Activated CD8-positive, alpha-beta T cell treated with anti-CD3 and anti-CD28 coated beads, Interleukin-2, amount 10 ng/mL, durations not matched to agents 7 days and 5 days (primary cell): ENCODE measurements at regions of chr17 and their contacts with region 1.

Region 1: DNA sequence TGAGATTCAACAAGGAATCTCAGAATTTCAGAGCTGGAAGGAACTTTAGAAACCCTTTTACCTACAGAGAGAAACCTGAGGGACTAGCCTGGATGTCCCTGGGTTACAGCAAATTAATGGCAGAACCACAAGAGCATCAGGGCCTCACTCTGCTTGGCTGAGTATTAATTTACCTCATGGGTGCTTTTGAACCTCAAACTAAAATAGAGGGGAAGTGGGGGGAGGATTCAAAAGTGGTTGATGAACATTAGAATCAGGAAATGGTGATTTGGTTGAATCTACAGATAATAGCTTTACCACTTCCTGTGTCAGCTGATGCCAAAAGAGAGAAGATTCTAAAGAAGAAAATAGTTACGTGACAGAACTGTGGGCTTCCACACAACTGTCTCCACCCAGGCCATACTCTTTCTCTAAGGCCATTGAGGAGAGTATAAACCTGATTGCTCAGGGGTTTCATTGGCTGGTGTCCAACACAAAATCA is 11.3 kb upstream of the SKAP1 start:
- DNase-seq: peak; percentile 71
- ATAC-seq: peak; percentile 65
- H3K4me3 Mint-ChIP-seq: peak overlapping the region; percentile 69
- H3K27ac Mint-ChIP-seq: peak overlapping the region; percentile 93
- H3K4me1 Mint-ChIP-seq: peaks cover 95% of the 10 kb centered on the region
- H3K27me3 Mint-ChIP-seq: no peaks in the 10 kb centered on the region

Region 2: DNA sequence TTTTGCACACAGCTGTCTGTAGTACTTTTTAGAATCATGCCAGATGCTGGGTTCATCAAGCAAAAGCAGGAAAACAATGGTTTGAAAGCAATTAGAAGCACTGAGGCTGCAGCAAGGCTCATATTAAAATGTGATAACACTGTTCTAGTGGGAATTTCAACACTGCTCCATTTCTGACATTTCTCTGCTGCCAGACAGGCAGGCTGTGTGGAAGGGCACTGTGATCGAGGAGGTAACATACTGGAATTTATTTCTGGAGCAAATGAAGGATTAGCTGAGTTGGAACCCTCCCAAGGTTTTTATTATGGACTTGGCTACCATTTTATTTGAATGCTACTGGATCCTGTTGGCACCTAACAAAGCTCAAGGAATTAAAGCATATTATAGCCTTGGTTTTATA is 78.1 kb before region 1 on chr17:
- CTCF ChIA-PET with region 1: no interaction called
- POLR2A ChIA-PET with region 1: interaction called, 11 read pairs
- DNase-seq: no peak
- ATAC-seq: no peak
- H3K4me3 Mint-ChIP-seq: no peak overlapping the region
- H3K27ac Mint-ChIP-seq: no peak overlapping the region
- H3K4me1 Mint-ChIP-seq: peaks cover 9% of the 10 kb centered on the region
- H3K27me3 Mint-ChIP-seq: no peaks in the 10 kb centered on the region

Region 3: GRCh38 chr17:48429638-48430586 is 11.4 kb before region 1 on chr17 and contains the start of gene SKAP1:
- CTCF ChIA-PET with region 1: interaction called, 36 read pairs
- POLR2A ChIA-PET with region 1: interaction called, 28 read pairs
- DNase-seq: peak; percentile 67
- ATAC-seq: peak; percentile 66
- H3K4me3 Mint-ChIP-seq: peak within 1 kb of the TSS; percentile 93
- H3K27ac Mint-ChIP-seq: peak within 1 kb of the TSS; percentile 97
- H3K4me1 Mint-ChIP-seq: peaks cover 80% of the 10 kb centered on the region
- H3K27me3 Mint-ChIP-seq: no peaks in the 10 kb centered on the region
- total RNA-seq, gene SKAP1: 93.8 to 94.1 TPM